ENCODE measurements at regions of chr19 and their contacts with region 1.

Region 1: GRCh38 chr19:19531951-19532805 is 3.5 kb downstream of the YJEFN3 start:
- DNase-seq: peak; percentile 90
- H3K4me3 ChIP-seq: no peak overlapping the region
- H3K27ac ChIP-seq: no peak overlapping the region
- H3K4me1 ChIP-seq: peaks cover 10% of the 10 kb centered on the region
- H3K27me3 ChIP-seq: no peaks in the 10 kb centered on the region
- CTCF ChIP-seq: peak; percentile 84 to 97 (median 89)
- POLR2A ChIP-seq: no peak

Region 2: DNA sequence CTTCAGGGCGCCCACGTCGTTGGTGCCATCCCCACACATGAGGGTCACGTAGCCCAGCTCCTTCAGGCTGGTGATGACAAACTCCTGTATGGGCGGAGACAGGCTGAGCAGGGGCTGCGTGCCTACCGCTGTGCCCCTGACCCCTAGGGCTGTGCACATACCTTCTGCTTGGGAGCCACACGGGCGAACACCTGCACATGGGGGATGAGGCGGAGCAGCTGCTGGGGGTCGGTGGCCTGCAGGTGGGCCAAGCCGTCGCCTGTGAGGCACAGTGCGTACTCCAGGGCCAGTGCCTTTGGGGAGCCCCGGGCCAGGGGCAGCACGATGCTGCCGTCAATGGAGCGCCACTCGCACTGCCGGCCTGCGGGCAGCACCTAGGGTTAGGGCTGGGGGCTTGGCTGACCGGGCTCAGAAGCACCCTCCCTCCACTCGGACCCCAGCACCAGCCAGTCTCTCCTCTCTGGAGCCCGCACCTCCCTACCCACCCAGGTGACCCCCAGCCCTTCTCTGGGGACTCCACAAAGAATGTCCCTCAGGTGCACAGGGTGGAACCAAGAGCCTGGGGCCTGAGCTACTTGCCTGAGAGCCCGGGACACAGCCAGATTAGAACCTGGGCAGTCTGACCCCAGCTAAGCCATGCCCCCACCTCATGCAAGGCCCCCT is 117.5 kb after region 1 on chr19:
- intact Hi-C with region 1: loop called (anchors 5 kb)
- DNase-seq: no peak
- H3K4me3 ChIP-seq: no peak overlapping the region
- H3K27ac ChIP-seq: no peak overlapping the region
- H3K4me1 ChIP-seq: no peaks in the 10 kb centered on the region
- H3K27me3 ChIP-seq: no peaks in the 10 kb centered on the region
- CTCF ChIP-seq: no peak
- POLR2A ChIP-seq: no peak